Calu3 (cell line): ENCODE measurements at regions of chr7 and their contacts with region 1.

Region 1: GRCh38 chr7:77759294-77759889 is 38.8 kb downstream of the TMEM60 start:
- DNase-seq: peak; percentile 72
- H3K4me3 Mint-ChIP-seq: no peak overlapping the region
- H3K27ac Mint-ChIP-seq: no peak overlapping the region
- H3K4me1 Mint-ChIP-seq: no peaks in the 10 kb centered on the region
- H3K27me3 Mint-ChIP-seq: no peaks in the 10 kb centered on the region
- CTCF ChIP-seq: peak; percentile 30

Region 2: DNA sequence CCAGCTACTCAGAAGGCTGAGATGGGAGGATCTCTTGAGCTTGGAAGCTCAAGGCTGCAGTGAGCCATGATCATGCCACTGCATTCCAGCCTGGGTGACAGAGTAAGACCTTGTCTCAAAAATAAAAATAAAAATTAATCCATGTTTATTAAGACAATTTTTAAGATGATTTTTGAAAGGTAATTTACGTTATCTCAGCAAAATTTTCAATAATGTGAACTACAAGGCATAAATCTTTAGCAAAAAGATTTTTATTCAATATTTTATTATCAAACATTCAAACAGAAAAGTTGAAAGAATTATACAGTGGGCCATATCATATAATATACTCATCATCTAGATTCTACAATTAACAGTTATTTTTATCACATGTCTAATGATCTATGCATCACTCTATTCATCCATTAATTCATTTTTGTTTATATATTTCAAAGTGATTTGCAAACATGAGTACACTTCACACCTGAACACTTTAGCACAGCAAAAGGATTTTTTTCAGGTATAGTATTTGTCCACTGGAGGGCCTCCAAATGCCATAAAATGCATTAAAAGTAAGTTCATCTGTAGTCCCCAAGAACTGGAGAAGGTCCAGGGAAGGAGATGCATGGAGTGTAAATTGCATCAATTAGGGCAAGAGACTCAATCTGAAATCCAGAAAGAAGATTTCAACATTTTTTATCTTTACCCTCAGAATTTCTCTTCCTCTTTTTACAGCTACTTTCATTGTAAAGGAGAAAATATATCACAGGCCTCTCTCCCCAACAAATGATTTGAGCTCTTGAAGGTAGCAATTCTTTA is 101.8 kb before region 1 on chr7:
- CTCF ChIA-PET with region 1: interaction called, 3 read pairs
- intact Hi-C with region 1: loop called (anchors 1 kb)
- DNase-seq: peak; percentile 21
- H3K4me3 Mint-ChIP-seq: no peak overlapping the region
- H3K27ac Mint-ChIP-seq: no peak overlapping the region
- H3K4me1 Mint-ChIP-seq: no peaks in the 10 kb centered on the region
- H3K27me3 Mint-ChIP-seq: no peaks in the 10 kb centered on the region
- CTCF ChIP-seq: peak; percentile 29

Region 3: GRCh38 chr7:77674878-77675277 is 84.5 kb before region 1 on chr7:
- CTCF ChIA-PET with region 1: no interaction called
- intact Hi-C with region 1: loop called (anchors 5 kb)
- DNase-seq: peak; percentile 57
- H3K4me3 Mint-ChIP-seq: no peak overlapping the region
- H3K27ac Mint-ChIP-seq: no peak overlapping the region
- H3K4me1 Mint-ChIP-seq: peaks cover 14% of the 10 kb centered on the region
- H3K27me3 Mint-ChIP-seq: no peaks in the 10 kb centered on the region
- CTCF ChIP-seq: no peak

Region 4: GRCh38 chr7:77696198-77697028 is 63.0 kb before region 1 on chr7 and contains the start of gene RSBN1L:
- CTCF ChIA-PET with region 1: no interaction called
- intact Hi-C with region 1: loop called (anchors 5 kb)
- DNase-seq: peak; percentile 96
- H3K4me3 Mint-ChIP-seq: peak within 1 kb of the TSS; percentile 96
- H3K27ac Mint-ChIP-seq: peak within 1 kb of the TSS; percentile 90
- H3K4me1 Mint-ChIP-seq: peaks cover 22% of the 10 kb centered on the region
- H3K27me3 Mint-ChIP-seq: no peaks in the 10 kb centered on the region
- CTCF ChIP-seq: no peak
- total RNA-seq, gene RSBN1L: 15.9 and 16.7 TPM in 2 replicates